ENCODE measurements at regions of chr5 and their contacts with region 1.

Region 1: GRCh38 chr5:134304311-134304710 is 62.7 kb downstream of the CDKL3 start:
- DNase-seq: no peak
- H3K4me3 ChIP-seq: no peak overlapping the region
- H3K27ac ChIP-seq: no peak overlapping the region
- H3K4me1 ChIP-seq: no peaks in the 10 kb centered on the region
- H3K27me3 ChIP-seq: no peaks in the 10 kb centered on the region
- CTCF ChIP-seq: no peak

Region 2: GRCh38 chr5:133884569-133885311 is 419.6 kb before region 1 on chr5:
- intact Hi-C with region 1: no loop called
- DNase-seq: peak; percentile 65 to 90 (median 80)
- H3K4me3 ChIP-seq: no peak overlapping the region
- H3K27ac ChIP-seq: no peak overlapping the region
- H3K4me1 ChIP-seq: peaks cover 0 to 7% (median 0%) of the 10 kb centered on the region in 3 donors
- H3K27me3 ChIP-seq: peaks cover 5% of the 10 kb centered on the region
- CTCF ChIP-seq: no peak

Region 3: DNA sequence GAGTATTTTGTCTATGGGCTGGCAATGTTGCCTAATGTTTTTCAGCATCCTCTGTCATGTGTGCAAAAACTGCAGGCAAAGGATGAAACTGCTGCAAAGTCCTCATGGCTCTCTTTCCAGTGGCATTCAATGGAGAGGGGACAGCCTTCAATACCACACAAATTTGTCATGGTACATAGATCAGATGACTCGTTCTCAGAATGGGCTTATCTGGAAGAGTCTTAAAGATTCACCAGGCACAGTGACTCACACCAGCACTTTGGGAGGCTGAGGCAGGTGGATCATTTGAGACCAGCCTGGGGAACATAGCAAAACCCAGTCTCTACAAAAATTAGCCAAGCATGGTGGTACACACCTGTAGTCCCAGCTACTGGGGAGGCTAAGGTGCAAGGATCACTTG is 102.1 kb after region 1 on chr5:
- intact Hi-C with region 1: no loop called
- DNase-seq: no peak
- H3K4me3 ChIP-seq: no peak overlapping the region
- H3K27ac ChIP-seq: no peak overlapping the region
- H3K4me1 ChIP-seq: peaks cover 0 to 9% (median 6%) of the 10 kb centered on the region in 3 donors
- H3K27me3 ChIP-seq: no peaks in the 10 kb centered on the region
- CTCF ChIP-seq: no peak

Region 4: GRCh38 chr5:134581241-134581981 is 277.1 kb after region 1 on chr5:
- intact Hi-C with region 1: loop called (anchors 5 kb)
- DNase-seq: peak in 4 of 5 donors; percentile 19 to 78 (median 32)
- H3K4me3 ChIP-seq: no peak overlapping the region
- H3K27ac ChIP-seq: no peak overlapping the region
- H3K4me1 ChIP-seq: peaks cover 0 to 18% (median 10%) of the 10 kb centered on the region in 3 donors
- H3K27me3 ChIP-seq: no peaks in the 10 kb centered on the region
- CTCF ChIP-seq: no peak